ENCODE measurements at regions of chr17 and their contacts with region 1.

Region 1: DNA sequence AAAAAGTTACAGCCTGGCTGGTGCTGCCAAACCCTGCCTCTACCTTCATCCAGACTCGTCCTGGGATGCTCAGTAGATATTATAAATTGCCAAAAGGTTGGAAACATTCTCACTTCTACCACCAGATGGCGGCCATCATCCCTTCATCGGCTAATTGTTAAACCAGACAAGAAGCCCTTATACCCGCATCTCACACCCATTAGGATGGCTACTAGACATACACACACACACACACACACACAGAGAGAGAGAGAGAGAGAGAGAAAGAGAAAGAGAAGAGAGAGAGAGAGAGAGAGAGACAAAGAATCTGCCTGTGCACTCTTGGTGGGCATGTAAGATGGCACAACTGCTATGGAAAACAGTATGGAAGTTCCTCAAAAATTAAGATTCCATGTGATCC is 15.0 kb upstream of the SCIMP start:
- DNase-seq: peak; percentile 65
- H3K4me3 ChIP-seq: no peak overlapping the region
- H3K27ac ChIP-seq: no peak overlapping the region
- H3K4me1 ChIP-seq: peaks cover 0 to 26% (median 14%) of the 10 kb centered on the region in 6 donors
- H3K27me3 ChIP-seq: no peaks in the 10 kb centered on the region
- CTCF ChIP-seq: peak; percentile 27 to 84 (median 58)
- POLR2A ChIP-seq: no peak

Region 2: GRCh38 chr17:5019475-5019956 is 230.1 kb before region 1 on chr17:
- intact Hi-C with region 1: no loop called
- DNase-seq: no peak
- H3K4me3 ChIP-seq: no peak overlapping the region
- H3K27ac ChIP-seq: no peak overlapping the region
- H3K4me1 ChIP-seq: peaks cover 0 to 33% (median 12%) of the 10 kb centered on the region in 6 donors
- H3K27me3 ChIP-seq: peaks cover 0 to 4% (median 0%) of the 10 kb centered on the region in 7 donors
- CTCF ChIP-seq: peak in 3 of 11 experiments; percentile 28 to 33 (median 31)
- POLR2A ChIP-seq: no peak

Region 3: DNA sequence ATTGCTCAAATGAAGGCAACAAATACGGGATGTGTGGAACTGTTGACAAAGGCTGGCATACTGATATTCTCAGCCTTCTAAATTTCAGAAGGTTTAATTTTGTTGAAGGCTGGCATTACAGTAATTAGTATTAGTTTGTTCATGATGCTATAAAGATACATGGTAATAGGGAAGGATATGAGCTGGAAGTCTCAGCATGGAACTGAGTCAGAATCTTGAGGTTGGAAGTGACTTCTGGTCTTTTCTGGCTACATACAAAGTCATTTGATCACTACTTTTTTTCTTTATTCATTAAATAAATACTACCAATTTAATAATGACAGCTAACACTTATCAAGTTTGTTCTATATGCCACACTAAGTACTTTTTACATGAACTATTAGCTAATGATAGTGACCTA is 55.0 kb after region 1 on chr17:
- intact Hi-C with region 1: loop called (anchors 10 kb)
- DNase-seq: no peak
- H3K4me3 ChIP-seq: no peak overlapping the region
- H3K27ac ChIP-seq: no peak overlapping the region
- H3K4me1 ChIP-seq: peaks cover 0 to 71% (median 40%) of the 10 kb centered on the region in 6 donors
- H3K27me3 ChIP-seq: no peaks in the 10 kb centered on the region
- CTCF ChIP-seq: no peak
- POLR2A ChIP-seq: no peak

Region 4: DNA sequence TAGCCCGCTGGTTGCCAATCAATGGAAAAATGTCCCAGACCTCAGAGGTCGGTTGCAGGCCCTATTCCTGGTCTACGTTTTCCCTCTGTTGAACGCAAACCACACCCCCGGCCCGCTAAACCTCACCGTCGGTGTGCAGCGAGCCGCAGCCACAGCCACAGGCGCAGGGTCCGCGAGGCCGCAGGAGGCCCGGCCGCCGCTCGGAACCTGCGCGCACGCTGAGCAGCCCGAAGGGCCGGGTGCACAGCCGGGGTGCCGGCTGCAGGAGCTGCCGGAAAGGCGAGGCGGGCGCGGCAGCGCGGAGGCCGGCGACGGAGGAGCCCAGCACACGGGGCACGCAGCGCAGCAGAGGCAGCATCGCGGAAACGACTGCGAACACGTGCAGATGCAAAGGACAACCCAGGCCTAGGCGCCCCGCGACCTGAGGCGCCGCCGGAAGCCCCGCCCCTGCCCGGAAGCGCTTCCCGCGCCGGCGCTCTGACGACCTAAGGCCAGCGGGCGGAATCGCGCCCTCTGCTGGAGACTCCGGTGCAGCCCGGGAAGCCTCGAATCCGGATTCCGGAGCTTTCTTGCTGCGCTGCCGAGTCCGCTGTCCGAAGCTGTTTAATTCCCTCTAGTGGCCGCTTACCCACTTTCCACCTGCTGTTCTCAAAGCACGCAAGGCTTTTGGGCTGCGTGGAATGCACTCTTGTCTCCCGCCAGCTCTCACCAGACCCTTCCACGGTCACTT is 189.3 kb after region 1 on chr17 and contains the start of gene C1QBP:
- intact Hi-C with region 1: loop called (anchors 10 kb)
- DNase-seq: peak; percentile 97
- H3K4me3 ChIP-seq: peak within 1 kb of the TSS; percentile 87 to 100 (median 94)
- H3K27ac ChIP-seq: peak within 1 kb of the TSS; percentile 78 to 89 (median 84)
- H3K4me1 ChIP-seq: peaks cover 21 to 47% (median 36%) of the 10 kb centered on the region in 6 donors
- H3K27me3 ChIP-seq: no peaks in the 10 kb centered on the region
- CTCF ChIP-seq: peak; percentile 97 to 100 (median 99)
- POLR2A ChIP-seq: peak in 1 of 3 donors; percentile 17
- total RNA-seq, gene C1QBP: 63.9 to 111 (median 82.2) TPM

Measured in spleen (tissue), 13 donors.